ENCODE measurements at regions of chr10 and their contacts with region 1.

Region 1: GRCh38 chr10:60426400-60426799 is 36.7 kb upstream of the ANK3 start:
- DNase-seq: peak; percentile 94
- ATAC-seq: peak; percentile 30
- H3K4me3 ChIP-seq: no peak overlapping the region
- H3K27ac ChIP-seq: no peak overlapping the region
- H3K4me1 ChIP-seq: peaks cover 16% of the 10 kb centered on the region
- H3K27me3 ChIP-seq: no peaks in the 10 kb centered on the region
- CTCF ChIP-seq: no peak
- POLR2A ChIP-seq: no peak
- RAD21 ChIP-seq: no peak

Region 2: GRCh38 chr10:60135020-60135419 is 291.4 kb before region 1 on chr10:
- CTCF ChIA-PET with region 1: no interaction called
- POLR2A ChIA-PET with region 1: no interaction called
- dilution Hi-C with region 1: no loop called
- in situ Hi-C with region 1: no loop called
- intact Hi-C with region 1: no loop called
- DNase-seq: no peak
- ATAC-seq: no peak
- H3K4me3 ChIP-seq: no peak overlapping the region
- H3K27ac ChIP-seq: no peak overlapping the region
- H3K4me1 ChIP-seq: no peaks in the 10 kb centered on the region
- H3K27me3 ChIP-seq: peaks cover 3% of the 10 kb centered on the region
- CTCF ChIP-seq: no peak
- POLR2A ChIP-seq: no peak
- RAD21 ChIP-seq: no peak

Region 3: DNA sequence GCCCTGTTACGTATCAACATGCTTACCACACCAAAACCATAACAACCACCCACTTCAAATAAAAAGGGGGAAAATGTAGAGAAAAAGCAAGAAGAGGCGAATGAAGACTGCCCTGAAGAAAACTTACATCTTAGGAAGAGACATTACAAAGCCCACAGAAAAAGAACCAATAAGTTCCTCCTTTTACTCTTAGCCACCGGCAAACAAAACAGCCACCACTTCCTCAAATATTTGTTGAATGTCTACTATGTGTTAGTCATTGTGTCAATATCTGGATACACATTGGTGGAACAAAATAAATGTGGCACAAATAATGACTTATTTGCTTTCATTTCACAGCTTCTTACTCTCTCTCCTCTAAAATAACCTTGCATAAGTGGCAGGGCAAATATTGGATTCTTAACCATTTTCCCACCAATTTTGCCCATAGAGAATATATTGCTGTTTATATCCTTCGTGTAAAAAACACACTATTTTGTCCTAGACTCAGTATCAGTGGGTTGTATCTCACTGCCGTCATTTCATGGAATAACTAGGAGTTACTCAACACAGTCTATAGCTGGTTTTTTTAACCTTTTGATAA is 143.5 kb before region 1 on chr10:
- CTCF ChIA-PET with region 1: no interaction called
- POLR2A ChIA-PET with region 1: no interaction called
- dilution Hi-C with region 1: no loop called
- in situ Hi-C with region 1: no loop called
- intact Hi-C with region 1: loop called (anchors 5 kb)
- DNase-seq: peak; percentile 56
- ATAC-seq: peak; percentile 49; the same call in 1 of the 2 replicates
- H3K4me3 ChIP-seq: no peak overlapping the region
- H3K27ac ChIP-seq: no peak overlapping the region
- H3K4me1 ChIP-seq: peaks cover 1% of the 10 kb centered on the region; the same call in 1 of the 2 replicates
- H3K27me3 ChIP-seq: peaks cover 4% of the 10 kb centered on the region; the same call in 1 of the 2 replicates
- CTCF ChIP-seq: no peak
- POLR2A ChIP-seq: no peak
- RAD21 ChIP-seq: no peak

Region 4: DNA sequence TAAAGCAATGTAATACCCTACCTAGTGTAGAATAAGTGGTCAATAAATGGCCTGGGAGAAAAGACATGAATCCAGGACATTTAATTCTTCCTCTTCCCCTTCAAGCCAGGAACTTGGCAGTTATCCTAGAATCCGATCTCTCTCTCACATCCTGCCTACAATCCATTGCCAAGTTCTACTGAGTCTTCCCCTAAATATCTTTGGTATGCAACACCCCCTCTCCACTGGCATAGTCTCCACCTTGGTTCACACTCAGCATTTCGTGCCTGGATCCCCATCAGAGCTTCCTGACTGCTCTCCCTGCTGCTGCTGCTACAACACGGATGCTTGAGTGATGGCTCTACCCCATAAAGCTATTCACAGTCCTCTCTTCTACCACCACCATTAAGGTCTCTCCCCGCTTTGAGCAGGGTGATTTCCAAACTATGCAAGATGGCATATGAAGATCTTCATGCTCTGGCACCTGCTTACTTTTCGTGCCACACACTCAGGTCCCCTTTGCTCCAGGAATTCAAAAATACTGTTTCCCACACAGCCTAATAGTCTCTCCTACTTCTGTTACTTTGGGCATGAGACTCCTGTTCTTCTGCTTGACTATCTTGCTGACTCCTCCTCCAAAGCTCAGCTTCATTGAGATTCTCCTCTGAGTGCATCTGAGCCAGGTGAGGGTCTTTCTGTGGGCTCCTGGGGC is 41.5 kb before region 1 on chr10:
- CTCF ChIA-PET with region 1: no interaction called
- POLR2A ChIA-PET with region 1: no interaction called
- dilution Hi-C with region 1: no loop called
- in situ Hi-C with region 1: no loop called
- intact Hi-C with region 1: loop called (anchors 5 kb)
- DNase-seq: peak; percentile 98
- ATAC-seq: peak; percentile 98
- H3K4me3 ChIP-seq: no peak overlapping the region
- H3K27ac ChIP-seq: peak overlapping the region; percentile 49
- H3K4me1 ChIP-seq: peaks cover 11% of the 10 kb centered on the region
- H3K27me3 ChIP-seq: no peaks in the 10 kb centered on the region
- CTCF ChIP-seq: no peak
- POLR2A ChIP-seq: no peak
- RAD21 ChIP-seq: no peak